ENCODE measurements at regions of chr9 and their contacts with region 1.

Region 1: DNA sequence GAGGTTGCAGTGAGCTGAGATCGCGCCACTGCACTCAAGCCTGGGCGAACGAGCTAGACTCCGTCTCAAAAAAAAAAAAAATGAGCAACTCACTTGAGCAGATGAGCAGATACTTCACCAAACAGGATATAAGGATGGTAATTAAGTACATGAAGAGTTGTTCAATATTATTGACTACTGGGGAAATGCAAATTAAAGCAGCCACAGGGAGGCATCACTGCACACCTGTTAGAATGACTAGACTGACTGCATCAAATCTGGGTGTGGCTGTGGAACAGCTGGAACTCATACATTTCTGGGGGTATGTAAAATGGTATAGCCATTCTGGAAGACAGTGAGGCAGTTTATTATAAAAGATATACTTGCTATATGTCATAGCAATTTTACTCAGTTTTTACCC is 93.0 kb downstream of the WNK2 start:
- DNase-seq: peak; percentile 17
- H3K4me3 ChIP-seq: no peak overlapping the region
- H3K27ac ChIP-seq: no peak overlapping the region
- H3K4me1 ChIP-seq: no peaks in the 10 kb centered on the region
- H3K27me3 ChIP-seq: no peaks in the 10 kb centered on the region
- CTCF ChIP-seq: peak; percentile 15

Region 2: DNA sequence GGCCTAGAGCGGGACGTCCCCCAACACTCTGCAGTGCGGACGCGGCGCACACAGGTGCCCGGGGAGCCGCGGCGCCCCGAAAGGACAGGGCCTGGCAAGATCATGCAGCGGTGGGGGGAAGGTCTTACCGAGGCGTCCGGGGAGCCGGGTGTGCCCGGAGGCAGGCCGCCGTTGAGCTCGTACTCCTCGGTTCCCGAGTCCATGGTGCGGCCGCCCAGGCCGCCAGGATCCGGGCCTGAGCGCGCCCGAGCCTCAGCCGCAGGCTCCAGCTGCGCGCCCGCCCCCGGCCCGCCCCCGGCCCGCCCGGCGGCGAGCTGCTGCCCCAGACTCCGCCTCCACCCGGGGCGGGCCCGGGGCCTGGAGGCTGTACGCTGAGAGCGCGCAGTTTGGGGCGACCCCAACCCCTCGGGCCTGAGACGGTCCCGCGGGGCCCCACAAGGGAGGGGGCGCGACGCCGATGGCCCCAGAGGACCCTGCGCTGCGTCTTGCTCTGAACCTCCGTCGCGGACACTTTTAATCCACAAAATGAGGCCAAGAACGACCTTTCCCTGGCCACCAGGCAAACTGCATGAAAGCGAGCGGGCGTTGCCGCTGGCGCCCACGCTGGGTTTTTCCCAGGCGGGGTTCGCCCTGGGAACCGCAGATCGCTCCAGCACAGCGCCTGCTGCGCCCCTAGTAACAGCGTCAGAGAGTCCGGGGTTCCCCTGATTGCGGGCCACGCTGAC is 142.8 kb before region 1 on chr9 and contains the start of gene NINJ1:
- intact Hi-C with region 1: no loop called
- DNase-seq: peak; percentile 76
- H3K4me3 ChIP-seq: peak within 1 kb of the TSS; percentile 71
- H3K27ac ChIP-seq: peak within 1 kb of the TSS; percentile 83
- H3K4me1 ChIP-seq: peaks cover 23% of the 10 kb centered on the region
- H3K27me3 ChIP-seq: no peaks in the 10 kb centered on the region
- CTCF ChIP-seq: no peak
- total RNA-seq, gene NINJ1: 24.5 to 29.4 TPM

Region 3: DNA sequence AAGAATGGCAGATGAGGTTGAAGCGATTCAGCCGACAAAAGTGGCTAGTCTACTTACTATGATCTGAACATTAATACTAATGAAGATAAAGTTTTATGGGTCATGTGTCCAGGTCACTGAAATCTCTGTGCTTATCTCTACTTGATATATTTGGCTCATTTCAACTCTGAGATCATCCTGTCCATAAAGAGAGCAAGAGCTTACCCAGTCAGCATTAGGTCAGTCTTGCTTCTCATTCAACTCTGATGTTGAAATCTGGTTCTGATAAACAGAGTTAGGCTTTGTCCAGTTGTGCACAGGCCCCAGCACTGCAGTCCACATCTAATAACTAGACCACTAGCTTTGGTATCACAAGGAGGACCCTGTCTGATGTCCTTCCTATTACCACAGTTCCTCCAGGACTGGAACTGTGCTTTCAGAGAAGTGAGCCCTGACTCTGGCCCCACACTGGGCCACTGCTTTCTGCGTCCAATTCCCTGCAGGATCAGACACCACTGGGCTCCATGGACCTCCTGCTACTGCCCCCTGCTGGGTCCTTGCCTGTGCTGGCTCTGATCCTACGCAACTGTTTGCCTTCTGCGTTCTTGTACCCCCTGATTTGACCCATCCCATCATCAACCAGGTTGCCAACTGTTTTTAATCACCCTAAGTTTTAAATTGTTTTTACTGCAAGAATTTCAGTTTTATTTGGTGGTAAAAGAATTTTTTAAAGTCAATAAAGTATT is 150.8 kb after region 1 on chr9:
- intact Hi-C with region 1: loop called (anchors 10 kb)
- DNase-seq: peak; percentile 65
- H3K4me3 ChIP-seq: no peak overlapping the region
- H3K27ac ChIP-seq: no peak overlapping the region
- H3K4me1 ChIP-seq: no peaks in the 10 kb centered on the region
- H3K27me3 ChIP-seq: no peaks in the 10 kb centered on the region
- CTCF ChIP-seq: peak; percentile 40

Region 4: GRCh38 chr9:93531374-93531773 is 254.4 kb after region 1 on chr9:
- intact Hi-C with region 1: loop called (anchors 10 kb)
- DNase-seq: no peak
- H3K4me3 ChIP-seq: no peak overlapping the region
- H3K27ac ChIP-seq: no peak overlapping the region
- H3K4me1 ChIP-seq: no peaks in the 10 kb centered on the region
- H3K27me3 ChIP-seq: no peaks in the 10 kb centered on the region
- CTCF ChIP-seq: no peak

Region 5: GRCh38 chr9:93546356-93546755 is 269.4 kb after region 1 on chr9:
- intact Hi-C with region 1: no loop called
- DNase-seq: no peak
- H3K4me3 ChIP-seq: no peak overlapping the region
- H3K27ac ChIP-seq: no peak overlapping the region
- H3K4me1 ChIP-seq: peaks cover 2% of the 10 kb centered on the region
- H3K27me3 ChIP-seq: no peaks in the 10 kb centered on the region
- CTCF ChIP-seq: no peak